ENCODE measurements at regions of chr2 and their contacts with region 1.

Region 1: GRCh38 chr2:182186132-182186735 is 200.6 kb downstream of the PPP1R1C start:
- DNase-seq: no peak

Region 2: GRCh38 chr2:182586432-182586831 is 400.2 kb after region 1 on chr2:
- intact Hi-C with region 1: loop called (anchors 10 kb)
- DNase-seq: no peak

Region 3: DNA sequence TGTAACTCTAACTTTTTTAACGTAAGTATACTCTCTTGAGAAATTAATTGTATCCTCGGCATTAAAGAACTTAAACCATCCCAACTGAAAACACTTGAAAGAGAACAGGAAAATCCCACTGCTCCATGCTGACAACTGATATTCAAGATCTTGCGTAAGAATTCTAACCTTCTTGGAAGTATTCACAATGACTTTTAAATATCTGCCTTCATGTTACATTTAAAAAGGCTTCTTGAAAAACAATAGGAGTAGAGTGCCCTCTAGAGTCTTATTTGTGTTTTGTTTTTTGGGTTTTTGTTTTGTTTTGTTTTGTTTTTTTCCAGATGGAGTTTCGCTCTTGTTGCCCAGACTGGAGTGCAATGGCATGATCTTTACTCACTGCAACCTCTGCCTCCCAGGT is 464.5 kb after region 1 on chr2:
- intact Hi-C with region 1: loop called (anchors 1 kb)
- DNase-seq: no peak

Measured in posterior cingulate gyrus (tissue), 11 donors.